MCF 10A (cell line): ENCODE measurements at regions of chr1 and their contacts with region 1.

Region 1: GRCh38 chr1:7042322-7043190 is 257.3 kb downstream of the CAMTA1 start:
- DNase-seq: peak; percentile 49
- H3K4me3 Mint-ChIP-seq: no peak overlapping the region
- H3K27ac Mint-ChIP-seq: no peak overlapping the region
- H3K4me1 Mint-ChIP-seq: no peaks in the 10 kb centered on the region
- H3K27me3 Mint-ChIP-seq: peaks cover 38% of the 10 kb centered on the region
- CTCF ChIP-seq: peak; percentile 49

Region 2: GRCh38 chr1:6794164-6794563 is 248.4 kb before region 1 on chr1:
- CTCF ChIA-PET with region 1: interaction called, 7 read pairs
- POLR2A ChIA-PET with region 1: no interaction called
- intact Hi-C with region 1: loop called (anchors 10 kb)
- DNase-seq: peak; percentile 42
- H3K4me3 Mint-ChIP-seq: no peak overlapping the region
- H3K27ac Mint-ChIP-seq: no peak overlapping the region
- H3K4me1 Mint-ChIP-seq: peaks cover 20% of the 10 kb centered on the region
- H3K27me3 Mint-ChIP-seq: no peaks in the 10 kb centered on the region
- CTCF ChIP-seq: peak; percentile 55

Region 3: DNA sequence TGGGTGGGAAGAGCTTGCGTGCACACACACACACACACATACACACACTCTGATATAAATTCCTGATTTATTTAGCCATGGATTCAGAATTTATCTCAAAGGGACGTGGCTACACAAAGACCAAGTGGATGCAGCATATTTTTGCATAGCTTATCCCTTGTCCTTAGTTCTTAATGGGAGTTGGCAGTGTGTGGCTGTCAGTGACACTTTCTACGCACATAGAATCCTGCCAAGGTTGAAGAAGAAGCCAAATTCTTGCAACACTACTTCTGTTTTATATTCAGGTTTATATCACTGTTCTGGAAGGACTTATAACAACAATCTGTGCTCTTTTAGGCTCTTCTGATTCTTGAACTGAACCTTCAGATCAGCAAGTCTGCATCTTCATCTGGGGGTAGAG is 35.4 kb after region 1 on chr1:
- CTCF ChIA-PET with region 1: interaction called, 12 read pairs
- POLR2A ChIA-PET with region 1: no interaction called
- intact Hi-C with region 1: no loop called
- DNase-seq: no peak
- H3K4me3 Mint-ChIP-seq: no peak overlapping the region
- H3K27ac Mint-ChIP-seq: no peak overlapping the region
- H3K4me1 Mint-ChIP-seq: no peaks in the 10 kb centered on the region
- H3K27me3 Mint-ChIP-seq: peaks cover 12% of the 10 kb centered on the region
- CTCF ChIP-seq: no peak

Region 4: DNA sequence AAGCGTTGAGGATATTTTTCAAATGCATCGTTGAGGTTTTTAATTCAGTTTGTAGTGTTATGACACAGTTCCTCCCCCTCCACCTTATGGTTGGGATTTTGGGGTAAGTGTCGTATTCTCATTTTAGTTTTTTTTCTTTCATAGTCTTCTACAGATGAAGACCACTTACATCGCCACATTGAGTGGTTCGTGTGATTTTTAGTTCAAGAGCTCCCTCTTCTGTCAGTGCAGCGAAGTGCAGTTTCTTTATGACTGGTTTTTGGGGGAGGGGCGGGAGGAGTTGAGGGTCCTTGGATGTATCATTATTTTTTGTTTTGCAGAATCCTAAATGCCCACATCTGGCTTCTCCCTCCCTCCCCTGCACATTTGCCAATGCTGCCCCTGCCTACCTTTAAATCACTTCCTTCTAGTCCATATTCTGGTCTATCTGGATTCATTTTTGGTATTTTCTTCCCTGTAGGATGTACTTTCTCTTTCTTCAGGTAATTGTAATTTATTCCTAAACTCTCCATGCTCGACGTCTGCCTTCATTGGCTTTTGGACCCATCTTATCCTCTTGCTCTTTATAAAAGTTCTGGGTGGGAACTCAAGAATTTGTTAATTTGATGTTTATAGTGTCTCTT is 175.8 kb after region 1 on chr1:
- CTCF ChIA-PET with region 1: interaction called, 9 read pairs
- POLR2A ChIA-PET with region 1: no interaction called
- intact Hi-C with region 1: loop called (anchors 1 kb)
- DNase-seq: peak; percentile 57
- H3K4me3 Mint-ChIP-seq: no peak overlapping the region
- H3K27ac Mint-ChIP-seq: no peak overlapping the region
- H3K4me1 Mint-ChIP-seq: peaks cover 4% of the 10 kb centered on the region
- H3K27me3 Mint-ChIP-seq: peaks cover 22% of the 10 kb centered on the region
- CTCF ChIP-seq: peak; percentile 87

Region 5: GRCh38 chr1:7646981-7647901 is 604.7 kb after region 1 on chr1:
- CTCF ChIA-PET with region 1: interaction called, 79 read pairs
- POLR2A ChIA-PET with region 1: interaction called, 4 read pairs
- intact Hi-C with region 1: loop called (anchors 1 kb)
- DNase-seq: peak; percentile 61
- H3K4me3 Mint-ChIP-seq: no peak overlapping the region
- H3K27ac Mint-ChIP-seq: no peak overlapping the region
- H3K4me1 Mint-ChIP-seq: no peaks in the 10 kb centered on the region
- H3K27me3 Mint-ChIP-seq: peaks cover 9% of the 10 kb centered on the region
- CTCF ChIP-seq: peak; percentile 96